Activated T-helper 1 cell treated with anti-CD3 and anti-CD28 coated beads, Interleukin-12 subunit alpha, Interleukin-12 subunit beta, Interleukin-2, Interleukin-4 antibody, amounts not matched to agents 30 ng/mL and 10 ng/mL and 1 ng/mL, durations not matched to agents 14 hours and 24 hours and 36 hours (primary cell): ENCODE measurements at regions of chr2 and their contacts with region 1.

Region 1: DNA sequence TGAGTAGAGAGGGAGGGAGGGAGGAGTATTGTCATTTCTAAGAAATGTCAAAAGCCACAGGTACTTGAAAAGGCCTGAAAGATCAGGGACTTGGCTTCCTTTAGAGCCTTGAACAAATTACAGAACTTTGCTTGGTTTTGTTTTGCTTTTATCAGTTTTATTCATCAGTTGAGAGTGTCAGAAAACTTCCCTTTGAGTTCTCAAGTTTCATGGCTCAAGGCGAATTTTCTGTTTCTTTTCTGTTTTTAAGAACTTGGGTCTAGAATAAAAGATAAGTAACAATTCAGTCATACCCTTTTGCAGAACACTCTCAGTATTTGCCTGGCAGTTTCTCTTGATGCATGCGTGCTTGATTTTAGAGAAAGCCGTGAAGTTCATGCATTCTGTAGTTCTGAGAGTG is 531.9 kb downstream of the PARD3B start:
- DNase-seq: peak; percentile 2
- H3K4me3 Mint-ChIP-seq: peak overlapping the region; percentile 28
- H3K27ac Mint-ChIP-seq: peak overlapping the region; percentile 11
- H3K4me1 Mint-ChIP-seq: peaks cover 35% of the 10 kb centered on the region
- H3K27me3 Mint-ChIP-seq: no peaks in the 10 kb centered on the region

Region 2: GRCh38 chr2:204900910-204901309 is 176.2 kb before region 1 on chr2:
- intact Hi-C with region 1: loop called (anchors 5 kb)
- DNase-seq: no peak
- H3K4me3 Mint-ChIP-seq: peak overlapping the region; percentile 28
- H3K27ac Mint-ChIP-seq: peak overlapping the region; percentile 67
- H3K4me1 Mint-ChIP-seq: peaks cover 52% of the 10 kb centered on the region
- H3K27me3 Mint-ChIP-seq: no peaks in the 10 kb centered on the region

Region 3: DNA sequence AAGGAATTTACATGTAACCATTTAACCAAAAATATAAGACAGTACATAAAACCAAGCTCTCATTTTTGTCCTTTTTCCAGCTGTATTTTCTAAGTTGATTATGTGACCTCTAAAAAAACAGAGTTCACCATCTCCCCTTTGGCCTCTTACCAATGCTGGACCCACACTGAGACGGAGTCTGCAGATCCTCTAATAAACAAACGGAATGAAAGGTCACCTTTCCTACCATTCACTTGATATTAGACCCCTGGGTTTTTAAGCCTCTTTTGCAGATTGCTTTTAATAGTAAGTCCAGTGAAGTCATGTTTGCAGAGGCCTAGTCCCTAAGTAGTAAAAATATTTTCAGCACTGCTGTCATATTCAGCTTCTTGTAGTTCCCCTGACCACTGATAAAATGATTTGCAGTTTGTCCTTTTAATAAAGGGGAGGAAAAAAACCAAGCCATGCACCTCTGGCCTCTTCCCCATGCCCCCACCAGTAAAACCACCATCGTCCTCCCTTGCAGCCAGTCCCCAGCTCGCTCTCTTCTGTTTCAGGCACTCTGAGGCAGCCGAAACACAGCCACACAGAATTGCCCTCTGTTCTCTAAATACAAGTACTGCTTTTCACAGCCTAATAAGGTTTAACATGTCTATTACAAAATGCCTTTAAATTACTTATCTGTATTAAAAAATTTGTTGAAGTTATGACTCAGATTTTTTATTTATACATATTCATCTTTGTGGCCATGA is 104.4 kb before region 1 on chr2:
- intact Hi-C with region 1: loop called (anchors 1 kb)
- DNase-seq: no peak
- H3K4me3 Mint-ChIP-seq: no peak overlapping the region
- H3K27ac Mint-ChIP-seq: peak overlapping the region; percentile 49
- H3K4me1 Mint-ChIP-seq: peaks cover 38% of the 10 kb centered on the region
- H3K27me3 Mint-ChIP-seq: no peaks in the 10 kb centered on the region

Region 4: DNA sequence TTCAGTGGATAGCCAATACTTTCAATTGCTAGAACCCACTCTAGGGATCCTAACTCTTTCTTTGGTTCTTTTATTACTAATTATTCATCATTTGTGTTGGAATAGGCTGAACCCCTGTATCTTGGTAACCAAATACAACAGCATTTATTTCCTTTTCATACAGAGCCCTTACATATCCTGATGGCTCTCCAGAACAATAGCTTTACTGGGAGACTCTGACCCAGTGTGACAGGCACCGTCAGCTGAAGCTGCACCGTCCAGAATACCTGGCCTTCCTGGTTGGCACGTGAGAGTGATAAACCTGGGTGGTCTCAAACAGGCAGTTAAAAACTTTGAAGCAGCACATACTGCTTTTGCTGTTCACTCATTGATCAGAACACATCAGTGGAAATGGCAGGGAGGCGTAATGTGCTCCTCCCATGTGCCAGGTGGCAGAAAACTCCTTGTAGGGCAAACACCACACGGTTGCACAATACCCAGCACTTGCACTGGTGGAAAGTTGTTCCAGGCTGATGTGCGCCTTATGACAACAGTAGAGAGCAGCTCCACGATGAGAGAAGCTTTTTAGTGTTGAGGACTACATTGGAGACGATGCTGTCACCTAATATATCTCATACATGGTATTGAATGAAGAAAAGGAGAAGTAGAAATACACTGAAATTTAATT is 75.7 kb before region 1 on chr2:
- intact Hi-C with region 1: no loop called
- DNase-seq: no peak
- H3K4me3 Mint-ChIP-seq: no peak overlapping the region
- H3K27ac Mint-ChIP-seq: no peak overlapping the region
- H3K4me1 Mint-ChIP-seq: peaks cover 34% of the 10 kb centered on the region
- H3K27me3 Mint-ChIP-seq: no peaks in the 10 kb centered on the region

Region 5: DNA sequence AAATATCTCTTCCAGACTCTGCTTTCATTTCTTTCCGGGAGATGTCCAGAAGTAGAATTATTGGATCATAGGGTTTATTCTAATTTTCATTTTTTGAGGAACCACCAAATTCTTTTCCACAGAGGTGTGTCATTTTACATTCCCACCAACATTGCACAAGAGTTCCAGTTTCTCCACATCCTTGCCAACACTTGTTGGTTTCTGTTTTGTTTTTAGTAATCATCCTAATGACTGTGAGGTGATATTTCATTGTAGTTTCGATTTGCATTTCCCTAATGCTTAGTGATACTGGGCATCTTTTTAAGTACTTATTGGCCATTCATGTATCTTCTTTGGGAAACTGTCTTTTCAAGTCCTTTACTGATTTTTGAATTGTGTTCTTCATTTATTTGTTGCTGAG is 18.8 kb before region 1 on chr2:
- intact Hi-C with region 1: loop called (anchors 2 kb)
- DNase-seq: no peak
- H3K4me3 Mint-ChIP-seq: no peak overlapping the region
- H3K27ac Mint-ChIP-seq: no peak overlapping the region
- H3K4me1 Mint-ChIP-seq: peaks cover 23% of the 10 kb centered on the region
- H3K27me3 Mint-ChIP-seq: no peaks in the 10 kb centered on the region

Region 6: GRCh38 chr2:205115511-205115910 is 38.4 kb after region 1 on chr2:
- intact Hi-C with region 1: no loop called
- DNase-seq: no peak
- H3K4me3 Mint-ChIP-seq: no peak overlapping the region
- H3K27ac Mint-ChIP-seq: no peak overlapping the region
- H3K4me1 Mint-ChIP-seq: peaks cover under 1% of the 10 kb centered on the region
- H3K27me3 Mint-ChIP-seq: no peaks in the 10 kb centered on the region